Breast epithelium (tissue), 4 donors: ENCODE measurements at regions of chr4 and their contacts with region 1.

Region 1: DNA sequence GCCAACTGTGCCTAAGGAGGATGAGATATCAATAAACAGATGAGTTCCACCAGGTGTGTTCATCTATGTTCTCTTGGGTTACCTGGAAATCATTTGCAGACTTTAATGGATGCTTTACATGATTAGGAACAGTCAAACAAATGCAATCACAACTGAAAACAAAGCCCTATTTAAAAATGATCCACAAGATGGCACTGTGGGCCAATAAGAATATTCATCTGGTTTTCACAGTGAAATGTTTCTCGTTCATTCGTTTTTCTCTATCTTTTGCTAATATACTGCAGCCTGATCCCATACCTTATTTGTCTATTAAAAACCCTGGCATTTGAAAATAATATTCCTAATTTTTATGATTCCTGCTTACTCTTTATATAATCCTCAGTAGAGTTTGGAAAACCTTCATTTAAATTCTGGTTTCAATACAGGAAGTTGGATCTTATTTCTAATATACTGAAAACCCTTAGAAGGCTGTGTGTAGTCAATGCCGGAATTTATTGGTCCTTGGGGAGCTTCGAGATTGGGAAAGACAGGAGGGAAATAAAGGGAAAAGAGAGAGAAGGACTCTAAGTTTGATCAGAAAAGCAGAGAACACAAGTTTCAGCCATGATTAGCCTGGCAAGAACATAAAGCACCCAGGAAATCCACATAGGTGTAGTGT is 63.8 kb upstream of the TAPT1 start:
- DNase-seq: no peak
- H3K4me3 ChIP-seq: no peak overlapping the region
- H3K27ac ChIP-seq: no peak overlapping the region
- H3K4me1 ChIP-seq: no peaks in the 10 kb centered on the region
- H3K27me3 ChIP-seq: no peaks in the 10 kb centered on the region
- CTCF ChIP-seq: peak in 2 of 3 donors; percentile 44 to 55
- POLR2A ChIP-seq: no peak

Region 2: GRCh38 chr4:15577508-15577907 is 712.5 kb before region 1 on chr4:
- intact Hi-C with region 1: no loop called
- DNase-seq: no peak
- H3K4me3 ChIP-seq: no peak overlapping the region
- H3K27ac ChIP-seq: no peak overlapping the region
- H3K4me1 ChIP-seq: no peaks in the 10 kb centered on the region
- H3K27me3 ChIP-seq: no peaks in the 10 kb centered on the region
- CTCF ChIP-seq: no peak
- POLR2A ChIP-seq: no peak

Region 3: GRCh38 chr4:16443504-16444088 is 153.6 kb after region 1 on chr4:
- intact Hi-C with region 1: loop called (anchors 10 kb)
- DNase-seq: no peak
- H3K4me3 ChIP-seq: no peak overlapping the region
- H3K27ac ChIP-seq: no peak overlapping the region
- H3K4me1 ChIP-seq: no peaks in the 10 kb centered on the region
- H3K27me3 ChIP-seq: no peaks in the 10 kb centered on the region
- CTCF ChIP-seq: peak in 1 of 3 donors; percentile 25
- POLR2A ChIP-seq: no peak

Region 4: GRCh38 chr4:16480011-16480410 is 190.0 kb after region 1 on chr4:
- intact Hi-C with region 1: no loop called
- DNase-seq: no peak
- H3K4me3 ChIP-seq: no peak overlapping the region
- H3K27ac ChIP-seq: no peak overlapping the region
- H3K4me1 ChIP-seq: no peaks in the 10 kb centered on the region
- H3K27me3 ChIP-seq: no peaks in the 10 kb centered on the region
- CTCF ChIP-seq: no peak
- POLR2A ChIP-seq: no peak